ENCODE measurements at regions of chr17 and their contacts with region 1.

Region 1: DNA sequence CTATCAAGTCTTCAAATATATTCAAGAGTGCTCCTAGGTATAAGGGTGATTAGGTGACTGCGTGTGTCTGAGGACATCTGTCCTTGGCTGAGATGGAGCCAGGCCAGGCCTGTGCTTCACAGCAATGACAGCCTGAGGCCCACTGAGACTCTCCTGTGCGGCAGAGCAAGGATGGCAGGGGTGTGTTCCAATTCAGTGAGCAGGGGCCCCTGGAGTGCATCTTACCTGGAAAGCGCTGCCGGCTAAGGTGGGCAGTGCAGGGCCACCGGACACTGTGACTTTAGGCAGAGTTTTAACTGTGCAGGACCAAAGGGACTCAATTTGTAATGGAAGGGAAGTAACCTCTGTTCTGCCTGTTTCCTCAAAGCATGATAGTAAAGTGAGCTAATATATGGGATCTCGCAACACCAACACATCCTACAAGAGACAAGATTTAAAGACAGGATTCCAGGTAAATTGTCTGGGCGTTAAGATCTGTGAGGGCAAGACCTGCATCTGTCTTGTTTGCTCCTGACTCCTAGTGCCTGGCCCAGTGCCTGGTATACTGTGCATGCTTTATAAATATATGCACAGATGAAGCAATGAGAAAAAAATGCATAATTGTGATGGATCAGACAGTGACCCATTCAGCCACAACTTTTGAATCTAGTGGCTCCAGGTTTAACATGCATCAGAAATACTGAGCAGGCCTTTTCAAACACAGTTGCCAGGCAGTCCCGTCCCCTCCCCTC is 86.7 kb downstream of the MRC2 start:
- DNase-seq: peak in 1 of 2 experiments; percentile 4
- H3K4me3 ChIP-seq: no peak overlapping the region
- H3K4me1 ChIP-seq: no peaks in the 10 kb centered on the region
- H3K27me3 ChIP-seq: no peaks in the 10 kb centered on the region

Region 2: DNA sequence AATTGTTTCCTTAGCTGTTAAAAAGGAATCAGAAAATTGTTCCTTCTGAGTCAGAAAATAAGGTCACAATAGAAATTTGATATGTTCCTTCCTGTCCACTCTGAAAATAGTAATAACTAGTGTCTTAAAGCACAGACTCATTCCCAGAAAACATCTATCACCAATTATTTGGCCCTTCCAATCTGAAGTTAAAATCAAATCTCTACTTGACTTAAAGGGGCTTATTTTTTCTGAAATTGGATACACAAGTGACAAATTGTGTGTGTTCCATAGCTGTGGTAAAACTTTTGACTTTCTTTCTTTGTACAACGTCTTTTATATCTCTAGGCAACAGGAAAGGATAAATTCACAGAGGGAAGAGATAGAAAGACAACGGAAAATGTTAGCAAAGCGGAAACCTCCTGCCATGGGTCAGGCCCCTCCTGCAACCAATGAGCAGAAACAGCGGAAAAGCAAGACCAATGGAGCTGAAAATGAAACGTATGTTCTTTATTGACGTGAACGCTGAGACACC is 141.2 kb before region 1 on chr17:
- in situ Hi-C with region 1: no loop called
- DNase-seq: no peak
- H3K4me3 ChIP-seq: no peak overlapping the region
- H3K4me1 ChIP-seq: no peaks in the 10 kb centered on the region
- H3K27me3 ChIP-seq: no peaks in the 10 kb centered on the region

Region 3: DNA sequence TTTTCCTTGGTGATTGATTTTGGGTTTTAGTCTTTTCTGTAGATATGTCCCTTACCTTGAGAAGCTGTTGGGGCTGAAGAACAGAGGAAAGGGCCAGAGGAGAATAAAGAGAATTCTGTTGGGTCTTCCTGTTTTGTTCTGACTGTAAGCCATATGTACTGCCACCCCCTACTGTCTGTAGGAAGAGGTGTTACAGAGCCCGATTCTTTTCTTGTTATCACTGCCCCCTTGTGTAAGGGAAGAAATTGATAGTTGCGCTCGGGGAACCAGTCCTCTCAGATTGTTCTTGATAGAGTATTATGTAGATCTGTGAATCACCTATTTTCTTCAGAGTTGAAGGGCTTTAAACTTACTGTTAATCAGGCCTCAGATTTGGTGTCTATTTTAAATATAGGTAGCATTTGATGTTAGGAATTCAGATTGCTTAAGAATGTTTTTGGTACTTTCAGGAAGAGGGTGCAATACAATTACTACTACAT is 254.3 kb after region 1 on chr17:
- in situ Hi-C with region 1: loop called (anchors 5 kb)
- DNase-seq: peak; percentile 70 to 91
- H3K4me3 ChIP-seq: peak overlapping the region; percentile 64
- H3K4me1 ChIP-seq: peaks cover 34% of the 10 kb centered on the region
- H3K27me3 ChIP-seq: no peaks in the 10 kb centered on the region